ENCODE measurements at regions of chr1 and their contacts with region 1.

Region 1: GRCh38 chr1:222634180-222635013 is 16.5 kb downstream of the MIA3 start:
- DNase-seq: peak; percentile 62 to 91 (median 68)
- ATAC-seq: peak; percentile 93
- H3K4me3 ChIP-seq: no peak overlapping the region
- H3K27ac ChIP-seq: no peak overlapping the region
- H3K4me1 ChIP-seq: no peaks in the 10 kb centered on the region
- H3K27me3 ChIP-seq: no peaks in the 10 kb centered on the region
- CTCF ChIP-seq: peak; percentile 65 to 95 (median 88)
- EP300 ChIP-seq: no peak
- POLR2A ChIP-seq: no peak
- RAD21 ChIP-seq: peak; percentile 90 to 91

Region 2: DNA sequence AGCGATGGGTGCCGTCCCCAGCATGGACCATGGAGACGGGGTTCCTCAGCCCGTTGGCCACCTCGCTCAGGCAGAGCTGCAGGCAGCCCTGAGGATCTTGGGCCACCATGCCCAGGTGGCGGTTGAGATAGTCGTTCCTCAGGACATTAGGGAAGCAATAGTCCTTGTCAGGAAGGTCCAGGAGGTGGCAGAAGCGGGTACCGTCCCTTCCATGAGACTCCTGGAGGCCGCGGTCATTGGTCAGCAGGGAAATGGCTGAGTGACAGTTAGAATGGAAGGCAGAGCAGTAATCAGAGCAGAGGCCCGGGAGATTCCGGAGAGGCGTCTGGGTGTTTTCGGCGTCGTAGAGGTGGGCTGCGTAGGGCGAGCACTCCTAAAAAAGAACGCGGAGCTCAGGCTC is 90.6 kb before region 1 on chr1:
- CTCF ChIA-PET with region 1: no interaction called
- POLR2A ChIA-PET with region 1: no interaction called
- in situ Hi-C with region 1: no loop called
- intact Hi-C with region 1: loop called (anchors 5 kb)
- DNase-seq: peak in 3 of 4 experiments; percentile 37 to 56 (median 51)
- ATAC-seq: peak; percentile 79
- H3K4me3 ChIP-seq: no peak overlapping the region
- H3K27ac ChIP-seq: no peak overlapping the region
- H3K4me1 ChIP-seq: peaks cover 3 to 9% of the 10 kb centered on the region in 2 experiments; a peak in 4 of 5 replicates
- H3K27me3 ChIP-seq: peaks cover 2 to 34% of the 10 kb centered on the region in 2 experiments; a peak in 4 of 5 replicates
- CTCF ChIP-seq: peak; percentile 42 to 48 (median 44); a peak in 4 of 6 replicates
- EP300 ChIP-seq: no peak
- POLR2A ChIP-seq: no peak
- RAD21 ChIP-seq: peak in 1 of 2 experiments; percentile 42; a peak in 2 of 4 replicates

Measured in K562 (cell line).